ENCODE measurements at regions of chr10 and their contacts with region 1.

Region 1: DNA sequence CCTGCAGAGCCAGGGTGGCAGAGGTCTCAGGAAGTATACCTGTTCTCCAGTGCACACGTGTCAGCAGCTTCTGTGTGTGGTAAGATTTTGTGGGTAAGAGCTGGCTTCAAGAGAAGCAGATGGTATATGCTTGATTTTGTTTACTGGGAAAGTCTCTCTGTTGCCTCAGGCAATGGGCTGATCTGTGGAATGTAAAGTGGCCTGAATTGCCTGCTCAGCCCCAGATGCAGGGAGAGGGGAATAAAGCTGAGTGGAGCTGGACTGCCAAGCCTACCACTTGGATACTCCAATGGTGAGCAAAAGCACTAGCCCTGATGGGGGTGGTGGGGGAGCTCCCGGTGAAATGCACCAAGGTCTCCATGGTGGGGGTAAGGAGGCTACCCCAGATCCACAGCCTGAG is 156.1 kb downstream of the WDR11 start:
- DNase-seq: no peak
- ATAC-seq: no peak
- H3K4me3 Mint-ChIP-seq: no peak overlapping the region
- H3K27ac Mint-ChIP-seq: no peak overlapping the region
- H3K4me1 Mint-ChIP-seq: no peaks in the 10 kb centered on the region
- H3K27me3 Mint-ChIP-seq: no peaks in the 10 kb centered on the region

Region 2: GRCh38 chr10:121033366-121033765 is 26.1 kb after region 1 on chr10:
- CTCF ChIA-PET with region 1: no interaction called
- POLR2A ChIA-PET with region 1: no interaction called
- intact Hi-C with region 1: loop called (anchors 1 kb)
- DNase-seq: no peak
- ATAC-seq: no peak
- H3K4me3 Mint-ChIP-seq: no peak overlapping the region
- H3K27ac Mint-ChIP-seq: no peak overlapping the region
- H3K4me1 Mint-ChIP-seq: no peaks in the 10 kb centered on the region
- H3K27me3 Mint-ChIP-seq: no peaks in the 10 kb centered on the region

Region 3: GRCh38 chr10:121076776-121077715 is 69.8 kb after region 1 on chr10:
- CTCF ChIA-PET with region 1: no interaction called
- POLR2A ChIA-PET with region 1: no interaction called
- intact Hi-C with region 1: no loop called
- DNase-seq: no peak
- ATAC-seq: no peak
- H3K4me3 Mint-ChIP-seq: no peak overlapping the region
- H3K27ac Mint-ChIP-seq: no peak overlapping the region
- H3K4me1 Mint-ChIP-seq: no peaks in the 10 kb centered on the region
- H3K27me3 Mint-ChIP-seq: peaks cover 9% of the 10 kb centered on the region

Region 4: GRCh38 chr10:121244818-121245217 is 237.6 kb after region 1 on chr10:
- CTCF ChIA-PET with region 1: no interaction called
- POLR2A ChIA-PET with region 1: no interaction called
- intact Hi-C with region 1: no loop called
- DNase-seq: no peak
- ATAC-seq: no peak
- H3K4me3 Mint-ChIP-seq: no peak overlapping the region
- H3K27ac Mint-ChIP-seq: no peak overlapping the region
- H3K4me1 Mint-ChIP-seq: no peaks in the 10 kb centered on the region
- H3K27me3 Mint-ChIP-seq: peaks cover 7% of the 10 kb centered on the region

Measured in activated CD4-positive, alpha-beta T cell treated with anti-CD3 and anti-CD28 coated beads for 36 hours (primary cell).